Left colon (tissue), 2 donors: ENCODE measurements at regions of chr6 and their contacts with region 1.

Region 1: DNA sequence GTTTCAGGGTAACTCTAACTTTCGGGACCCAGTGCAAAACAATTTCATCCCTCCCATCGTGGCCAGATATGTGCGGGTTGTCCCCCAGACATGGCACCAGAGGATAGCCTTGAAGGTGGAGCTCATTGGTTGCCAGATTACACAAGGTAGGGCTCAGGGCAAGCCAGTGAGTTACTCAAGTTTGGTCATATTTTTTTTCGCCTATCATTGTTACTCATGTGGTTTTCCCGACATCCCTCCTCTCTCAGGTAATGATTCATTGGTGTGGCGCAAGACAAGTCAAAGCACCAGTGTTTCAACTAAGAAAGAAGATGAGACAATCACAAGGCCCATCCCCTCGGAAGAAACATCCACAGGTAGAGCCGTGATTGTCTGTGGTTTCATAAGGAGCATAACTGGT is 58.2 kb downstream of the DCBLD1 start:
- DNase-seq: no peak
- ATAC-seq: no peak

Region 2: GRCh38 chr6:117298941-117299340 is 241.7 kb before region 1 on chr6:
- intact Hi-C with region 1: no loop called
- DNase-seq: no peak
- ATAC-seq: no peak

Region 3: DNA sequence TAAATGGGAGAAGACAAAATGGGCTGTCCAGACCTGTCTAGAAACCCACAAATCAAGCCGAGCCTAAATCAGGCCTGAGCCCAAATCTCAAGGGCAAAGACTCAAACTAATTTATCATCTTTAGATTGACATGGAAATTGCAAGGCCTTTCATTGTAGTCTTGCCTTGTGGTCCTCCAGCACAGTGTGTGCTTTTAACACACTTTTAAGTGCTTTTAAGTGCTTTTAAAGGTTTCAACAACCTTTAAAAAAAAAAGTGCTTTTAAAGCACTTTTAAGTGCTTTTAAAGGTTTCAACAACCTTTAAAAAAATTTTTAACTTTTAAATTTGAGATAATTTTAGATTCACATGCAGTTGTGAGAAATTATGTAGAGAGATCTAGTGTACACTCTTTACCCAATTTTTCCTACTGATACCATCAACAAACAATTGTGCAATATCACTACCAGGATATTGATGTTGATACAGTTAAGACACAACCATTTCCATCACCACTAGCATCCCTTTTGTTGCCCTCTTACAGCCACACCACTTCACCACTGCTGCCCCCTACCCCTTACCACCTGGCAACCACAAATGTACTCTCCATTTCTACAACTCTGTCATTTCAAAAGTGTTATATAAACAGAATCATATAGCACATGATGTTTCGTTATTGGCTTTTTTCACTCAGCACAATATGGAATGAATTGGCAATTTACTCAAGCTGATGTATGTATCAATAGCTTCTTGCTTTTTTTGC is 81.3 kb before region 1 on chr6:
- intact Hi-C with region 1: loop called in 1 of 2 experiments (anchors 5 kb)
- DNase-seq: no peak
- ATAC-seq: no peak